Gastrocnemius medialis (tissue), 4 donors: ENCODE measurements at regions of chr14 and their contacts with region 1.

Region 1: GRCh38 chr14:75307700-75308379 is 29.2 kb downstream of the FOS start:
- DNase-seq: peak; percentile 73 to 80
- ATAC-seq: peak; percentile 71 to 79
- H3K4me3 ChIP-seq: no peak overlapping the region
- H3K27ac ChIP-seq: no peak overlapping the region
- H3K4me1 ChIP-seq: peaks cover 11 to 26% of the 10 kb centered on the region in 2 donors
- H3K27me3 ChIP-seq: no peaks in the 10 kb centered on the region
- CTCF ChIP-seq: peak; percentile 84 to 94 (median 90)
- POLR2A ChIP-seq: no peak

Region 2: GRCh38 chr14:74973003-74973653 is 334.7 kb before region 1 on chr14:
- in situ Hi-C with region 1: no loop called
- intact Hi-C with region 1: no loop called
- DNase-seq: peak in 1 of 2 donors; percentile 60
- ATAC-seq: peak in 1 of 2 donors; percentile 42
- H3K4me3 ChIP-seq: no peak overlapping the region
- H3K27ac ChIP-seq: peak overlapping the region; percentile 45 to 69 (median 63)
- H3K4me1 ChIP-seq: peaks cover 31 to 32% of the 10 kb centered on the region in 2 donors
- H3K27me3 ChIP-seq: no peaks in the 10 kb centered on the region
- CTCF ChIP-seq: no peak
- POLR2A ChIP-seq: no peak

Region 3: GRCh38 chr14:75141967-75142366 is 165.9 kb before region 1 on chr14:
- in situ Hi-C with region 1: no loop called
- intact Hi-C with region 1: no loop called
- DNase-seq: no peak
- ATAC-seq: no peak
- H3K4me3 ChIP-seq: no peak overlapping the region
- H3K27ac ChIP-seq: peak overlapping the region; percentile 60 to 95 (median 82)
- H3K4me1 ChIP-seq: peaks cover 56 to 63% of the 10 kb centered on the region in 2 donors
- H3K27me3 ChIP-seq: no peaks in the 10 kb centered on the region
- CTCF ChIP-seq: peak in 2 of 5 experiments; percentile 23 to 38
- POLR2A ChIP-seq: no peak

Region 4: DNA sequence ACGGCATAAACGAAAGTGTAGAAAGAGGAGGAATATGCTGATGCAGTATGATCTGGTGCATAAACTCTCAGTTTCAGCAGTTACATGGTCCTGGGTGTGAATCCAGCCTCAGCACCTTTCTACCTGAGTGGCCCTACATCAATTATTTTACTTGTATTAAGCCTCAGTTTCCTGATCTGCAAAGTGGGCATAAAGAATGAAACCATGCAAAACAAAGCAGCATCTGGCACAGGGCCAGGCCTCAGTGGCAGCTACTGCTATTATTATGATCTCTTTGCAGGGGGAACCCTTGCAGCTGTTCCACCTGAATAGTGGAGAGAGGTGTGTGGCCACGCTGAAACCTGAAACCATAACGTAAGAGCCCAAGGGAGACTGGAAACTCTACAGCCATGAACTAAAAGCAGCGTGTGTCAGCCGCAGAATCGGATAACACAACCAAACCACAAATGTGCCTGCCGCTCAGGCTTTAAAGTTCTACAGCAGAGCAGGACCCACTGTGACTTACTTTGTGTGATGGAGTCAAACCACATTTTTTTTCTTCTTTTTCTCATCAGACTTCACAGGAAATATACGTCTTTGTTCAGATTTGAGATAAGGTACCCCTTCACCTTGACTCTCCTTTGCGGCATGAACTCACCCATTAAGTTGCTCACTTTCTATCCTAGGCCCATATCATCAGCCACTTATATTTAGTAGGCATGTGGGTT is 58.4 kb before region 1 on chr14:
- in situ Hi-C with region 1: no loop called
- intact Hi-C with region 1: no loop called
- DNase-seq: peak; percentile 85 to 89
- ATAC-seq: peak; percentile 88 to 89
- H3K4me3 ChIP-seq: no peak overlapping the region
- H3K27ac ChIP-seq: peak overlapping the region; percentile 90 to 96 (median 91)
- H3K4me1 ChIP-seq: peaks cover 25 to 35% of the 10 kb centered on the region in 2 donors
- H3K27me3 ChIP-seq: no peaks in the 10 kb centered on the region
- CTCF ChIP-seq: no peak
- POLR2A ChIP-seq: peak in 1 of 2 donors; percentile 60

Region 5: GRCh38 chr14:75411214-75411540 is 103.3 kb after region 1 on chr14:
- in situ Hi-C with region 1: loop called in 2 of 4 experiments (anchors 5 to 10 kb)
- intact Hi-C with region 1: loop called (anchors 1 kb)
- DNase-seq: no peak
- ATAC-seq: no peak
- H3K4me3 ChIP-seq: no peak overlapping the region
- H3K27ac ChIP-seq: no peak overlapping the region
- H3K4me1 ChIP-seq: peaks cover 18 to 27% of the 10 kb centered on the region in 2 donors
- H3K27me3 ChIP-seq: no peaks in the 10 kb centered on the region
- CTCF ChIP-seq: no peak
- POLR2A ChIP-seq: no peak

Region 6: GRCh38 chr14:75427482-75428229 is 119.8 kb after region 1 on chr14 and contains the start of gene JDP2:
- in situ Hi-C with region 1: no loop called
- intact Hi-C with region 1: loop called (anchors 5 kb)
- DNase-seq: peak; percentile 90 to 92
- ATAC-seq: peak; percentile 67 to 73
- H3K4me3 ChIP-seq: peak within 1 kb of the TSS; percentile 73 to 92 (median 88)
- H3K27ac ChIP-seq: peak within 1 kb of the TSS; percentile 88 to 96 (median 96)
- H3K4me1 ChIP-seq: peaks cover 54 to 64% of the 10 kb centered on the region in 2 donors
- H3K27me3 ChIP-seq: no peaks in the 10 kb centered on the region
- CTCF ChIP-seq: peak in 3 of 5 experiments; percentile 19 to 38 (median 32)
- POLR2A ChIP-seq: peak; percentile 74 to 90
- total RNA-seq, gene JDP2: 17.3 to 80.2 (median 31.7) TPM

Region 7: GRCh38 chr14:75487155-75487671 is 179.4 kb after region 1 on chr14:
- in situ Hi-C with region 1: loop called (anchors 5 kb)
- intact Hi-C with region 1: loop called (anchors 1 kb)
- DNase-seq: no peak
- ATAC-seq: no peak
- H3K4me3 ChIP-seq: no peak overlapping the region
- H3K27ac ChIP-seq: no peak overlapping the region
- H3K4me1 ChIP-seq: peaks cover 0 to 6% of the 10 kb centered on the region in 2 donors
- H3K27me3 ChIP-seq: no peaks in the 10 kb centered on the region
- CTCF ChIP-seq: no peak
- POLR2A ChIP-seq: no peak

Region 8: GRCh38 chr14:75560962-75561432 is 253.2 kb after region 1 on chr14:
- in situ Hi-C with region 1: no loop called
- intact Hi-C with region 1: loop called (anchors 2 kb)
- DNase-seq: peak; percentile 83 to 92
- ATAC-seq: peak; percentile 71 to 77
- H3K4me3 ChIP-seq: no peak overlapping the region
- H3K27ac ChIP-seq: peak overlapping the region; percentile 73 to 89 (median 80)
- H3K4me1 ChIP-seq: peaks cover 40 to 52% of the 10 kb centered on the region in 2 donors
- H3K27me3 ChIP-seq: no peaks in the 10 kb centered on the region
- CTCF ChIP-seq: peak; percentile 79 to 87 (median 85)
- POLR2A ChIP-seq: no peak